Activated CD4-positive, alpha-beta T cell treated with anti-CD3 and anti-CD28 coated beads, Interleukin-2, amount 10 ng/mL, durations not matched to agents 7 days and 5 days (primary cell): ENCODE measurements at regions of chr17 and their contacts with region 1.

Region 1: GRCh38 chr17:74478420-74479100 is 12.1 kb downstream of the CD300A start:
- DNase-seq: peak; percentile 65
- H3K4me3 Mint-ChIP-seq: peak overlapping the region; percentile 19
- H3K27ac Mint-ChIP-seq: peak overlapping the region; percentile 70
- H3K4me1 Mint-ChIP-seq: peaks cover 55% of the 10 kb centered on the region
- H3K27me3 Mint-ChIP-seq: no peaks in the 10 kb centered on the region

Region 2: GRCh38 chr17:74430706-74431567 is 47.6 kb before region 1 on chr17:
- CTCF ChIA-PET with region 1: no interaction called
- POLR2A ChIA-PET with region 1: no interaction called
- DNase-seq: no peak
- H3K4me3 Mint-ChIP-seq: peak overlapping the region; percentile 32
- H3K27ac Mint-ChIP-seq: no peak overlapping the region
- H3K4me1 Mint-ChIP-seq: peaks cover 8% of the 10 kb centered on the region
- H3K27me3 Mint-ChIP-seq: peaks cover 67% of the 10 kb centered on the region

Region 3: DNA sequence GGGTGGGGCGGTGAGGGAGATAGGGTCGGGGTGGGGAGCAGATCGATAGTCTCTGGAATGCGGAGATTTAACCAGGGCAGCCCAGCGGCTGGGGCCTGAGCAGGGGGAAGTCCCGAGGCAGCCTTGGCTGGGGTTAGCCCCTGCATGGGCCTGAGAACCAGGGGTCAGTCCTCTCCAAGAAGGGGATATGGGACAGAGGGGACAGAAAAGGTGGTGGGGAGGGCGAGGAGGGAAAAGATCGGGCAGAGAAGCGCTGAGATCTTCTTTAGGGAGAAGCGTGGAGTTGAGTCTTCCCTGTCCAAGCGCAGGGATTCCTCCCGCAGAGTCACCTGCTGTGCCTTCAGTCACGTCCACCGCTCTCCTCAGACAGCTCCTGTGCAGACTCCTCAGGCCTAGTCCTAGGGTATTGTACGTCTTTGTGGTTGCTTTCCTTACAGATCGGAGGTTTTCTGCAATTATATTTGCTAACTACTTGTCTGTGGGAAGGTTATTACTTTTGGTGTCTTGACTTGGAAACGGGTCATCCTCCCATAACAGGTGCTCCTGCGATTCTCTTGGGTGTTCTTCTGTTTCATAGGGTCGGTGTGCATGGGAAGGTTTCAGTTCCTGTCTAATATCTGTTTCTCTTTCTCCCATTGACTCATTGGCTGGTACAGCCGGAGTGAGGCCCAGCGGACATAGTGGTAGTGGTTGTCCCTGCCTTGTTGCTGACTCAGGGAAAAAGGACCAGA is 11.2 kb before region 1 on chr17:
- CTCF ChIA-PET with region 1: interaction called, 4 read pairs
- POLR2A ChIA-PET with region 1: interaction called, 13 read pairs
- DNase-seq: no peak
- H3K4me3 Mint-ChIP-seq: peak overlapping the region; percentile 67
- H3K27ac Mint-ChIP-seq: peak overlapping the region; percentile 58
- H3K4me1 Mint-ChIP-seq: peaks cover 23% of the 10 kb centered on the region
- H3K27me3 Mint-ChIP-seq: peaks cover 11% of the 10 kb centered on the region